GM10248 (cell line): ENCODE measurements at regions of chr22 and their contacts with region 1.

Region 1: DNA sequence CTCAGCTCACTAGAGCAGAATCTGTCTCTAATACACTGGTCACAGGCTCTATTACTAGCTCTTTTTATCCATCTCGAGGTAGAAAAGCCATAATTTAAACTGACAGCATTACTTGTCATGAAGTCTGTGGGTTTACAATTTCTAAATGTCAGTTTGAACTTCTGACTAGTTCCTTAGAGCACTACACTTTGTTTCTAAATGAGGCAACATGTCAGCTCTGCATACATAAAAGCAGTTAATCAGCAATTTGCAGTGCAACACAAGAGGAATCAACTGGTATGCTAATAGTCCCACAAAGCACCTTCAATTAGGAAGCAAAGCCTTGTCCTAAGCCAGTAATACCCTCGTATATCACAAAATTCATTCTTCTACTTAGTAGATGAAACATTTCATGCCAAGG is 321.3 kb downstream of the TTC28 start:
- DNase-seq: no peak
- CTCF ChIP-seq: no peak

Region 2: GRCh38 chr22:28051787-28052356 is 306.4 kb before region 1 on chr22:
- CTCF ChIA-PET with region 1: no interaction called
- POLR2A ChIA-PET with region 1: no interaction called
- DNase-seq: no peak
- CTCF ChIP-seq: peak; percentile 66

Region 3: DNA sequence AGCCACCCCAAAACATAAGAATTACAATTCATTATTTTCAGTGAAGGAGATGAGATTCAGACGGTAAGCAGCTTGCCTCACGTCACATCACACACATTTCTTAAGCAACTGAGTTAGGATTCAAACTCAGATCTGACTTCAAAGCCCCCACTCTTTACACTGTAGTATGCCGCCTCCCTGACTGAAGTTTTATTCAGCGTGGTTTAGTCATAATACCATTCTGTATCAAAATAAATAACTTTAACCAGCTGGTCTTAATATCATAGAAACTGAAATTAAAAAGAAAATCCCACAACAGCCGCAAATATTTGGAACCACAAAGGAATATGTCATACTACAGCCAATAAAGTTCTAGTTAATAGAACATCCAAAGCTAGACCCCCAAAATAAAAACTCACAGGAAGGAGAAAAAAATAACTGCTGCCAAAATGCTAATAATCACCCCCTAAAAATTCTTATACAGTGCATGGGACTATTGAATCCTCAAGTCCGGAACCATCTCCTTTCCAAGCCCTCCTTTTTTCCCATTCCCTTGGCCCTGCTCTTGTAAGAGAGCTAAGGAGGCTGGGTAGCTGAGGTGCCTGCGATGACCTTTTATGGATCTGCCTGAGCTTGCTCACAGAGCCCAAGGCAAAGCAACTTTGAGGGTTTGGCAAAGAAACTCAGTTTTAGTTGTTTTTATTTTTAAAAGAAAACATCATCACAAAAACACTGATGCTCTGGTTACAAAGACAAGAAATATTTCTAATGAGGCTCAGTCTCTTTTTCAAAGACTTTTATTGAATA is 13.2 kb before region 1 on chr22:
- CTCF ChIA-PET with region 1: interaction called, 18 read pairs
- POLR2A ChIA-PET with region 1: no interaction called
- DNase-seq: no peak
- CTCF ChIP-seq: no peak

Region 4: GRCh38 chr22:28395920-28396753 is 37.8 kb after region 1 on chr22:
- CTCF ChIA-PET with region 1: no interaction called
- POLR2A ChIA-PET with region 1: no interaction called
- DNase-seq: no peak
- CTCF ChIP-seq: no peak